ENCODE measurements at regions of chr3 and their contacts with region 1.

Region 1: GRCh38 chr3:129596194-129597086 is 10.0 kb downstream of the PLXND1 start:
- DNase-seq: peak; percentile 93
- H3K4me3 ChIP-seq: peak overlapping the region in 2 of 4 donors; percentile 11 to 21
- H3K27ac ChIP-seq: peak overlapping the region; percentile 72 to 82 (median 78)
- H3K4me1 ChIP-seq: peaks cover 0 to 91% (median 75%) of the 10 kb centered on the region in 4 donors
- H3K27me3 ChIP-seq: no peaks in the 10 kb centered on the region
- CTCF ChIP-seq: no peak
- EP300 ChIP-seq: no peak
- POLR2A ChIP-seq: no peak

Region 2: GRCh38 chr3:129560901-129561594 is 35.4 kb before region 1 on chr3:
- intact Hi-C with region 1: loop called (anchors 5 kb)
- DNase-seq: peak; percentile 92
- H3K4me3 ChIP-seq: peak overlapping the region in 2 of 4 donors; percentile 1 to 18
- H3K27ac ChIP-seq: peak overlapping the region; percentile 75 to 83 (median 80)
- H3K4me1 ChIP-seq: peaks cover 0 to 52% (median 51%) of the 10 kb centered on the region in 4 donors
- H3K27me3 ChIP-seq: no peaks in the 10 kb centered on the region
- CTCF ChIP-seq: no peak
- EP300 ChIP-seq: no peak
- POLR2A ChIP-seq: no peak

Region 3: GRCh38 chr3:129623447-129624128 is 27.1 kb after region 1 on chr3:
- intact Hi-C with region 1: no loop called
- DNase-seq: peak; percentile 80
- H3K4me3 ChIP-seq: no peak overlapping the region
- H3K27ac ChIP-seq: peak overlapping the region; percentile 43 to 99 (median 76)
- H3K4me1 ChIP-seq: peaks cover 0 to 50% (median 42%) of the 10 kb centered on the region in 4 donors
- H3K27me3 ChIP-seq: no peaks in the 10 kb centered on the region
- CTCF ChIP-seq: no peak
- EP300 ChIP-seq: no peak
- POLR2A ChIP-seq: no peak

Region 4: GRCh38 chr3:129633751-129634392 is 37.4 kb after region 1 on chr3:
- intact Hi-C with region 1: no loop called
- DNase-seq: no peak
- H3K4me3 ChIP-seq: no peak overlapping the region
- H3K27ac ChIP-seq: no peak overlapping the region
- H3K4me1 ChIP-seq: no peaks in the 10 kb centered on the region
- H3K27me3 ChIP-seq: no peaks in the 10 kb centered on the region
- CTCF ChIP-seq: no peak
- EP300 ChIP-seq: no peak
- POLR2A ChIP-seq: no peak

Measured in sigmoid colon (tissue), 7 donors.